ENCODE measurements at regions of chr1 and their contacts with region 1.

Region 1: DNA sequence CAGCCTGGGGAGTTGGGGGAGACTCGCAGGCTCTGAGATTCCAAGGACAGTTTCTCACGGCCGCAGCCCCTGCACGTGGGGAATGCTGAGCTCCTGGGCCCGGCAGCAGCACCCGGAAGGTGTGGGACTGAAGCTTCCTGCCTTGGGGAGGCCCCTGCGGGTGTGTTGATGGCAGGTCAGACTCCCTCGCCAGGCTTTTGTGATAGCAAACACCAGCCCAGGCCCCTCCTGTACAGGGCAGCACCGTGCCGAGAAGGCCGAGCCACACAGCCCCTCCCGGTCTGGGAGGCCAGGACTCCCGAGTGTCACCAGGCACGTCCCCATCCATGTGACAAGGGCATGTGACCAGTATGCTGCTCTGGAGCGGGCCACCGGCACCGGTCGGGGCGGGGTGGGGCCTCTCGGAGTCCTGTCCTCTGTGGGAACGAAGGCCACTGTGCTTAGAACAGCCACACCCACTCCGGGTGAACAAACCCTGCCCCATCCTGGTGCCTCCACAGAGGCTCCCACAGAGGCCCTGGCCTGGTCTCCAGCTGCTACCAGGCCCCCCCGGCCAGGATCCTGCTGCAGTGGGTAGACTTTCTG is 31.1 kb upstream of the ARHGEF16 start:
- DNase-seq: no peak
- H3K4me3 ChIP-seq: no peak overlapping the region
- H3K27ac ChIP-seq: no peak overlapping the region
- H3K4me1 ChIP-seq: no peaks in the 10 kb centered on the region
- H3K27me3 ChIP-seq: peaks cover 2% of the 10 kb centered on the region
- CTCF ChIP-seq: no peak

Region 2: DNA sequence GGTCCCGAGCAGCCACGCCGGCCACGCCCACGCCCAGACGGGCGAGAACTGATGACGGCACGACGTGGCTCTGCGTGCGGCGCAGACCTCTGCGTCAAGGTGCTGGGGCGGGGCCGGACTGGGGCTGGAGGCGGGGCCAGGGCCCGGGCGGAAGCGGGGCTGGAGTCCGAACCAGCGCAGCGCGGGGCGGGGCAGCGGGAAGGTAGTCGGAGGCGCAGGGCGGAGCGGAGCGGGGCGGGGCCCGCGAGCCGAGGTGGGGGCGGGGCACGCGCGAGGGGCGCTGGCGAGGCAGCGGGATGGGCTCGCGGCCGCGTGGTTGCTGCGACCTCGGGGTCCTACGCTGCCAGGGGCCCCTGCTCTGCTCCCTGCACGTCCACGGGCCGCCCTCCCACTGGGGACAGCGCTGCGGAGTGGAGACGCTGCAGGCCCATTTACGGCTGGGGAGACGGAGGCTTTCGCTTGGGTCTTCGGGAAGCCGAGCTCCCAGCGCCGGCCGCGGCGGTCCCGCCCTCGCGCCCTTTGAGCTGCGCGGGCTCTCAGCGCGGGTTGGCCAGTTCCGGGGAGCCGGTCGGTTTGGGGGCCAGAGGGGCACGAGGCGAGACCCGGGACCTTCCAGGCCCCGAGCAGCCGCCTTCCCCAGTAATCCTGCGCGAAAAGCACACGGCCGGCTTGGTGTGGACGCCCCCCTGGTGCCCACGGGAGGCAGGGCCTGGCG is 1010.7 kb before region 1 on chr1 and contains the start of gene PEX10:
- CTCF ChIA-PET with region 1: no interaction called
- dilution Hi-C with region 1: no loop called
- in situ Hi-C with region 1: loop called in 1 of 2 experiments (anchors 10 kb)
- intact Hi-C with region 1: loop called (anchors 1 kb)
- DNase-seq: peak; percentile 93
- H3K4me3 ChIP-seq: peak within 1 kb of the TSS; percentile 70 to 97 (median 95)
- H3K27ac ChIP-seq: peak within 1 kb of the TSS; percentile 72
- H3K4me1 ChIP-seq: peaks cover 31% of the 10 kb centered on the region
- H3K27me3 ChIP-seq: no peaks in the 10 kb centered on the region
- CTCF ChIP-seq: no peak
- total RNA-seq, gene PEX10: 29.5 to 32.8 TPM

Region 3: DNA sequence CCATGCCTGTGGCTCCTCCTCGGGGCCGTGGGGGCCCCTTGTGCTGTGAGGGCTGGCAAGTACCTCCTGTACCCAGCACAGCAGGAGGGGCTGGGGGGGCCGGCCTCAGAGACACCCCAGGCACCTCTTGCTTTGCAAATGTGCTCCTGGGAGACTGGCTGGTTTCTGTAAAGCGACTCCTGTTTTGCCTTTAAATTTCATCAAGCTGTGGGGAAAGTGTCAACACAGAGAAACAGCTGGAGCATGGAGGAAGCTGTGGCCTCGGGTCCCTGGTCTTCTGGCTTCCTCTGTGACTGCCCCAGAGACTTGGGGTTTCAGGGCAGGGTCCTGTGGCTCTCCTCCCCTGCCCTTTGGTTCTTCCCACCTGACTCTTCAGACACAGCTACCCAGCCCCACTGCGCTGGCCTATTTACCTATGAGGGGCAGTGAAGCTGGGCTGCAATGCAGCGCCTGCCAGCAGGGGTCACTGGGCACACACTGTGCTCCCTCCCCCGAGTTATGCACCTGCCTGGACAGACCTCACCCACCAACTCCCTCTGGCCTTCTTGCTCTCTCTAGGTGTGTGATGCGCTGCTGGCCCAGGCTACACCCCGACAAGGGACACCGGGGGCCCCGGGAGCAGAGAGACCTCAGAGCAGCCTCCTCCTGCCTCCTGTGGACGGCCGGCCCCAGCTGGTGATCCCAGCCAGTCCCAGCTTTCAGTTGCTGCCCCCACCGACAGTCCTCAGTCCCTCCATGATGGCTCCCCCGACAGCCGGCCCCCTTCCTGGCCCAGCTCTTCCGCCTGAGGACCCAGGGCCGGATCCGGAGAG is 993.4 kb before region 1 on chr1:
- CTCF ChIA-PET with region 1: no interaction called
- dilution Hi-C with region 1: no loop called
- in situ Hi-C with region 1: loop called in 1 of 2 experiments (anchors 10 kb)
- intact Hi-C with region 1: no loop called
- DNase-seq: no peak
- H3K4me3 ChIP-seq: peak overlapping the region; percentile 70 to 83 (median 75)
- H3K27ac ChIP-seq: peak overlapping the region; percentile 74
- H3K4me1 ChIP-seq: peaks cover 54% of the 10 kb centered on the region
- H3K27me3 ChIP-seq: no peaks in the 10 kb centered on the region
- CTCF ChIP-seq: peak; percentile 63 to 79

Region 4: DNA sequence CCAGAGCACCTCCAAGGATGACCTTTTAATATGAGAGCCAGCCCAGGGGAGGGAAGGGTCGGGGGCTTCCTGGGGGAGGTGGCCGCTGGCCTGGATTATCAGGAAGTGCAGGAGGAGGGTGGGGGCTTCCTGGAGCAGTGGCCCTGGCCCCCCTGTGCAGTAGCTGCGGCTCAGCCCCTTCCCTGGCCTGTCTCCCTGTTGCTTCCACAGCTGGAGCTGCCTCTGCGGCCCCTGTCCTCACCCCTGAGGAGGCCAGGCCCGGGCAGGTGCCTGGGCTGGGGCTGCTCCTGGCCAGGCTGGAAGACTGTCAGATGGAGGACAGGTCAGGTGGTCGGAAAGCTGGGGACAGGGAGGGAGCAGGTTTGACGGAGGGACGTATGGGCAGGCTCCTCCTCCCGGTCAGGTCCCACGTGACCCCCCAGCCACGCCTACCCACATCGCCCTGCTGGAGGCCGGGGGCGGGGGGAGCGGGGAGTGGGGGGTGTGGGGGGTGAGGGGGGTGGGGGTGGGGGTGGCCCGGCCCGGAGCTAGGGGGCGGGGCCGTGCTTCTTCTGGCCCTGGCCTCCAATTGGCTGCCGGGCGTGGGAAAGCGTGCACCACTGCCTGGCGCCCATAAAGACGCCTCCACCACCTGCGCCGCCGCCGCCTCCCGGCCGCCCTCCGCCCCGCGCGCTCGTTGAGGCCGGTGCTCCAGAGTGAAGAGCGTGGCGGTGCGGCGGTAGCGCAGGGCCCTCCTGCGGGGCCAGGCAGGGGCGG is 877.4 kb before region 1 on chr1:
- CTCF ChIA-PET with region 1: no interaction called
- dilution Hi-C with region 1: no loop called
- in situ Hi-C with region 1: no loop called
- intact Hi-C with region 1: loop called (anchors 2 kb)
- DNase-seq: peak; percentile 57
- H3K4me3 ChIP-seq: peak overlapping the region in 2 of 3 experiments; percentile 43 to 44
- H3K27ac ChIP-seq: no peak overlapping the region
- H3K4me1 ChIP-seq: peaks cover 31% of the 10 kb centered on the region
- H3K27me3 ChIP-seq: no peaks in the 10 kb centered on the region
- CTCF ChIP-seq: no peak

Region 5: DNA sequence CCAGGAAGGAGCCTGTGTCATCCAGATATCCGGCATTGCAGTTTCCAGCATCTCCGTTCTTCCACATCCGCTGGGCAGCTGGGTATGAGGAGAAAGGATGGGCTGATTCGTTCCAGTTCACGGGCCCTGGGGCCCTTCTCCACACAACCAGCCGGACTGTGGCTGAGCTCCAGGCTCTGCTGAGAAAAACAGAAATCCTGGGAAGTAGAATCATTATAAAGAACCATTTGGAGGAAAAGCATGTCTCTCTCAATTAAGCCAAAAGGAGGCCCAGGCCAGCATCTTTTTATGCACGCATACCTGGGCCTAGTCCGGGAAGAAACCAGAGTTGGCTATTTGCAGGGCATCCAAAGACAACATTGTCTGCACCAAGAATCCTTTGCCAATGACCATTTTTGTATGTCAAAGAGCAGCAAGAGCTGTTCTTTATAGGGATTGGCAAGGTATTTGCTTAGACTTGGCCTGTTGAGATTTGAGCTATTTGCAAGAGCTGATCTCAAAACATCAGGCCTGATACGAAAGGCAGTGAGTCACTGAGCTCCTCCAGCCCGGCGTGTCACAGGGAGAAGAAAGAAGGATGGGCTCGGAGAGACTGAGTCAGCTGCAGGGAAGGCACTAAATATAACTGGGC is 53.8 kb before region 1 on chr1:
- CTCF ChIA-PET with region 1: no interaction called
- dilution Hi-C with region 1: loop called (anchors 10 kb)
- in situ Hi-C with region 1: no loop called
- intact Hi-C with region 1: no loop called
- DNase-seq: peak; percentile 18
- H3K4me3 ChIP-seq: no peak overlapping the region
- H3K27ac ChIP-seq: no peak overlapping the region
- H3K4me1 ChIP-seq: no peaks in the 10 kb centered on the region
- H3K27me3 ChIP-seq: no peaks in the 10 kb centered on the region
- CTCF ChIP-seq: no peak

Region 6: GRCh38 chr1:3491291-3492246 is 68.2 kb after region 1 on chr1:
- CTCF ChIA-PET with region 1: interaction called, 10 read pairs
- dilution Hi-C with region 1: no loop called
- in situ Hi-C with region 1: no loop called
- intact Hi-C with region 1: no loop called
- DNase-seq: peak; percentile 35
- H3K4me3 ChIP-seq: no peak overlapping the region
- H3K27ac ChIP-seq: no peak overlapping the region
- H3K4me1 ChIP-seq: peaks cover 8% of the 10 kb centered on the region
- H3K27me3 ChIP-seq: no peaks in the 10 kb centered on the region
- CTCF ChIP-seq: peak; percentile 65 to 93

Measured in mammary epithelial cell (primary cell).